ENCODE measurements at regions of chr6 and their contacts with region 1.

Region 1: DNA sequence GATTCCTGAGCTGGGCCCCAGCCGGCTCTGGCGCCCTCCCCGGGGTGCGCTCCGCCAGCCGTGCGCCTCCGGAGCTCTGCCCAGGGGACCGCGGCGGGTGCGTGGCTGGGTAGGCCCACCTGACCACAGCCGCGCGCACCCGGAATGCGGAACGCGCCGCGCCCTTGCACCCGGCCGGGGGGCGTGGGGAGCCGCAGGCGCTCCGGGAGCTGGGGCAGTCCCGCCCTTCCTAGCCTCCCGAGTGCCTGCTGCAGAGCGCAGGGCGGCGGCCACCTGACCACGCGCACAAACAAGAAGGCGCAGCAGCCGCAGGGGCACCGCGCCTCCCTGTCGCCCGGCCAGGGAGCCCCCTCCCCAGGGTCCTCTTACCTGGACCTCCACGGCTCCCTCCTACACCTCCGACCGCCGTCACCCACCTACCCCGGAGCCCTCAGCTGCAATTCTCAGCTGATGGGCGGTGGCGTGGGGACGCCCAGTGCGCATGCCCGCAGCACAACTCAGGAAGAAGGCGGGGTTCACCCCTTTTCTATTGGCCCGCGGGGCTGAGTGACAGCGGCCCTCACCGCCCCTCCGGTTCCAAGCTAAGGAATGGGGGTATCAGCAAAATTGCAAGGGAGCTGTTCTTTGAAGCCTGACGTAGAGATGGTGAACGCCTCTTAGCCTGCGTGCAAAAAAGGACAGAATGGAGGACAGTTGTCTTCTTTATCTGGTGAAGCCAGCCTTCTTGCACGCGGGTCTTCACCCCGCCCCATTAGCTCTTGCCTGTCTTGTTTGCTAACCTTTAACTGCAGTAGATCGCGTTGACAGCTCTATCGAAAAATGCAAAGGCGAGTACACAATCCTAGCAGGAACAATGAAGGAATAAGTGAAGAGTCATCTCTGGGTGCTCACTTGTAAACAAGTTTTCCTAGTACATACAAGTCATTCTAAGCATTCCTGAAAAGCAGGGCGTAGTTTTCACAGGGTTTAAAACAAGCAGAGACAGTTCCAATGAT is at the start of gene STX7:
- DNase-seq: peak; percentile 73 to 84 (median 78)
- H3K4me3 ChIP-seq: peak within 1 kb of the TSS; percentile 81 to 92 (median 84)
- H3K4me3 Mint-ChIP-seq: peak within 1 kb of the TSS; percentile 95 to 99
- H3K27ac ChIP-seq: peak within 1 kb of the TSS; percentile 79 to 85
- H3K27ac Mint-ChIP-seq: peak within 1 kb of the TSS; percentile 92 to 98 (median 97)
- H3K4me1 ChIP-seq: peaks cover 33 to 42% of the 10 kb centered on the region in 2 donors
- H3K4me1 Mint-ChIP-seq: peaks cover 45% of the 10 kb centered on the region
- H3K27me3 ChIP-seq: no peaks in the 10 kb centered on the region
- H3K27me3 Mint-ChIP-seq: peaks cover 0 to 2% (median 2%) of the 10 kb centered on the region in 3 donors
- CTCF ChIP-seq: no peak
- polyA plus RNA-seq, gene STX7: 49.7 to 85.1 (median 81.7) TPM

Region 2: DNA sequence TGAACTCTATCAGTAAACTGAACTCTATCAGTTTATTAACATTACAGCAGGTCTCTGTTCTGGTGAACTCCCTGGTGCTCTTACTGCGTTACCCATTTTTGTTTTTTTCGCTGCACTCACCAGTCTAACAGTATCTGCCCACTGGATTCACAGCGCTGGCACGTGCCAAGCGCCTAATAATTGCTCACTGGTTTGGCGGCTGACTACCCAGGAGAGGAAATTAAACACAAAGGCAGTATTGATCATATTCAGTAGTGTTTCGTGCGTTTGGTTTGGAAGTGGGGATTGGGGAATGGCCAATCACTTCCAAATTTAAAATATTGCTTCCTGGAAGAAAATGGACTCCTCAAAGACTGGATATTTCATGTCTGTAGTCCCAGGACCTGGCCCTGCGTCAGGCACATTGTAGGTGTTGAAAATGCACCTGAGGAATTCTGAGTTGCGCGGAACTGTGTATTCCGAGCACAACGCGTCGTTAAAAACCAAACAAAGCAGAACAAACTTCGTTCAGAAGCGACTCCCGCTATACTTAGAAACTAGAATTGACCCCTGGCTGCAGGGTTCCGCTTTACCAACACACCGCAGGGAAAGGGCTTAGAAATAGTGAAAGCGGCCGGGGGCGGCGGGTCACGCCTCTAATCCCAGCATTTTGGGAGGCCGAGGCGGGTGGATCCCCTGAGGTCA is 300.4 kb after region 1 on chr6:
- intact Hi-C with region 1: loop called in 1 of 2 experiments (anchors 5 kb)
- DNase-seq: peak; percentile 56 to 69 (median 67)
- H3K4me3 ChIP-seq: peak overlapping the region; percentile 77 to 89 (median 82)
- H3K4me3 Mint-ChIP-seq: peak overlapping the region; percentile 98 to 99
- H3K27ac ChIP-seq: peak overlapping the region; percentile 85 to 90
- H3K27ac Mint-ChIP-seq: peak overlapping the region; percentile 93 to 97 (median 95)
- H3K4me1 ChIP-seq: peaks cover 22 to 26% of the 10 kb centered on the region in 2 donors
- H3K4me1 Mint-ChIP-seq: peaks cover 27% of the 10 kb centered on the region
- H3K27me3 ChIP-seq: no peaks in the 10 kb centered on the region
- H3K27me3 Mint-ChIP-seq: peaks cover 3 to 6% (median 5%) of the 10 kb centered on the region in 3 donors
- CTCF ChIP-seq: no peak